Activated naive CD4-positive, alpha-beta T cell treated with anti-CD3 and anti-CD28 coated beads for 36 hours (primary cell): ENCODE measurements at regions of chr1 and their contacts with region 1.

Region 1: GRCh38 chr1:10867138-10867721 is 70.8 kb upstream of the CASZ1 start:
- DNase-seq: peak; percentile 52
- H3K4me3 Mint-ChIP-seq: no peak overlapping the region
- H3K27ac Mint-ChIP-seq: no peak overlapping the region
- H3K4me1 Mint-ChIP-seq: peaks cover 12% of the 10 kb centered on the region
- H3K27me3 Mint-ChIP-seq: peaks cover 64% of the 10 kb centered on the region

Region 2: GRCh38 chr1:10514490-10515235 is 352.6 kb before region 1 on chr1:
- CTCF ChIA-PET with region 1: interaction called, 3 read pairs
- intact Hi-C with region 1: loop called (anchors 1 kb)
- DNase-seq: peak; percentile 45
- H3K4me3 Mint-ChIP-seq: no peak overlapping the region
- H3K27ac Mint-ChIP-seq: no peak overlapping the region
- H3K4me1 Mint-ChIP-seq: peaks cover 60% of the 10 kb centered on the region
- H3K27me3 Mint-ChIP-seq: no peaks in the 10 kb centered on the region